GM13977 (cell line): ENCODE measurements at regions of chr17 and their contacts with region 1.

Region 1: DNA sequence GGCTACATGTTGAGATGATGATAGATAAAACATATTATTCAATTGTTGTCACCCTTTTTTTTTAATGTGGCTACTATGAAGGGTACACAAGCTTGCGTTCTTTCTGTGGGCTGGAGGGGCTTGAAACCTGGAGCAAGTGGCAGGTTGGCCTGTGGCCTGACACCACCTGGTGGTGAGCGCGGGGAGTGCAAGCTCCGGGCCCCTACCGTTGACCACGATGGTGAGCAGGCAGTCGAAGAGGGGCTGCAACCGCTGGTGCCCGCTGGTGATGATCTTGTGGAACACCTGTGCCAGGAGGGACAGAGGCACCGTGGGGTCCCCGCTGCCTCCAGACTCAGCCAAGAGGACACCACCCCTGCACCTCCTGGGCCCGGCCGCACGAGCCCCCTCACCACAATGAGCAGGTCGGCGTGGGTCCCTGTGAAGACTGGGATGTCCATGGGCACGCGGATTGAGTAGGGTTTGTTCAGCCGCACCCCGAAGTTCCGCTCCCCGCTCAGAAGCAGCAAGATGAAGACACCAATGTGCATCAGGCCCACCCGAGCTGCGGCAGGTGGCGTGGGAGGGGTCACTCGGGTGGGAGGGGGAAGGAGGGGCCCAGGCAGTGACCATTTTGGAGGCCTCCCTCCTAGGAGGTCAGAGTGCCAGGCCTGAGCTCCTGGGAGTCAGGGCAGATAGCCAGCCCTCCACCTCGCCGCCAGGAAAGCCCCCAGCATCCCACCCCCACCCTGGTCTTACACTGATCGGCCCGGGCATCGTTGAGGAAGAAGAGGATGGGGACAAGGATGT is 14.4 kb downstream of the HID1 start:
- DNase-seq: peak; percentile 90
- CTCF ChIP-seq: peak; percentile 97

Region 2: DNA sequence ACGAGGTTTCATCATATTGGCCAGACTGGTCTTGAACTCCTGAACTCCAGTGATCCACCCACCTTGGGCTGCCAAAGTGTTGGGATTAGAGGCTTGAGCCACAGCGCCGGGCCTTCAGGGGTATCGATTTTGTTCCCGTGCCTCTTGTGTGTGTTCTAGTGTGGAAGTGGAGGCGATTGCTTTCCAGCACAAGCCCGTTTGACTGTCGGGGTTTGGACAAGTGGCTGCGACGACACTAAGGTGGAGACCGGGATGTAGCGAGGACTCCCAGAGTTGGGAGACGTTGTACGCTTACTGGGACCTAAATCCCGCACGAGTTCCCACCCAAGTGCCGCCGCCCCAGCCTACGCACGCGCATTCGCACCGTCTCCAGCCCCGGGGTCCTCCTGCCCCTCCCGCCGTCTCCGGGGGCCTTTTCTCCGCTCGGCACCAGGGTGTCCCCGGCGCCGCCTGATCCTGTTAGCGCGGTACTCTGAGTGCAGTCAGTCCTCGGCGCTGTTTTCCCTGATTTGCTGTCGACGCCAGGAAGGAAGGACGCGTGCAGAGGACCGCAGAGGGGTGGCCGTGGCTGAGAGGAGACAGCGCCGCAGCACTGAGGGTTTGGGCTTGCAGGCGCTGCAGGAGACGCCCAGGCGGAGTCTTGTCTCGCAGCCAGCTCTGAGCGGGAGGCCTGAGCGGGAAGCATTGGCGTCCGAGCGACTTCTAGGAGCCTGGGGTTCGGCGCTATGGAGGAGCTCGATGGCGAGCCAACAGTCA is 247.1 kb after region 1 on chr17 and contains the start of gene NUP85:
- in situ Hi-C with region 1: loop called (anchors 10 kb)
- DNase-seq: peak; percentile 97
- CTCF ChIP-seq: no peak